Mammary epithelial cell (primary cell): ENCODE measurements at regions of chr20 and their contacts with region 1.

Region 1: DNA sequence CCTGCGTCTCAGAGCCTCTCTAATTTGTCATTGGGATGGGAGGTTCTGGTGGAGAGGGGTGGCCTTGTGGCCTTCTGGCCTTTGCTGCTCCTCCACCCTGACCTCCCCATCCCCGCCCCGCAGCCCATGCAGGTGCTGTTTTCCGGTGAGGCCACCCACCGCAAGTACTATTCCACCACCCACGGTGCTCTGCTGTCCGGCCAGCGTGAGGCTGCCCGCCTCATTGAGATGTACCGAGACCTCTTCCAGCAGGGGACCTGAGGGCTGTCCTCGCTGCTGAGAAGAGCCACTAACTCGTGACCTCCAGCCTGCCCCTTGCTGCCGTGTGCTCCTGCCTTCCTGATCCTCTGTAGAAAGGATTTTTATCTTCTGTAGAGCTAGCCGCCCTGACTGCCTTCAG is 171.8 kb upstream of the RNF24 start:
- DNase-seq: no peak
- H3K4me3 ChIP-seq: no peak overlapping the region
- H3K27ac ChIP-seq: no peak overlapping the region
- H3K4me1 ChIP-seq: peaks cover 13% of the 10 kb centered on the region
- H3K27me3 ChIP-seq: no peaks in the 10 kb centered on the region
- CTCF ChIP-seq: no peak

Region 2: GRCh38 chr20:4119854-4120209 is 67.3 kb before region 1 on chr20:
- CTCF ChIA-PET with region 1: no interaction called
- dilution Hi-C with region 1: no loop called
- in situ Hi-C with region 1: no loop called
- intact Hi-C with region 1: no loop called
- DNase-seq: no peak
- H3K4me3 ChIP-seq: no peak overlapping the region
- H3K27ac ChIP-seq: no peak overlapping the region
- H3K4me1 ChIP-seq: no peaks in the 10 kb centered on the region
- H3K27me3 ChIP-seq: no peaks in the 10 kb centered on the region
- CTCF ChIP-seq: no peak

Region 3: DNA sequence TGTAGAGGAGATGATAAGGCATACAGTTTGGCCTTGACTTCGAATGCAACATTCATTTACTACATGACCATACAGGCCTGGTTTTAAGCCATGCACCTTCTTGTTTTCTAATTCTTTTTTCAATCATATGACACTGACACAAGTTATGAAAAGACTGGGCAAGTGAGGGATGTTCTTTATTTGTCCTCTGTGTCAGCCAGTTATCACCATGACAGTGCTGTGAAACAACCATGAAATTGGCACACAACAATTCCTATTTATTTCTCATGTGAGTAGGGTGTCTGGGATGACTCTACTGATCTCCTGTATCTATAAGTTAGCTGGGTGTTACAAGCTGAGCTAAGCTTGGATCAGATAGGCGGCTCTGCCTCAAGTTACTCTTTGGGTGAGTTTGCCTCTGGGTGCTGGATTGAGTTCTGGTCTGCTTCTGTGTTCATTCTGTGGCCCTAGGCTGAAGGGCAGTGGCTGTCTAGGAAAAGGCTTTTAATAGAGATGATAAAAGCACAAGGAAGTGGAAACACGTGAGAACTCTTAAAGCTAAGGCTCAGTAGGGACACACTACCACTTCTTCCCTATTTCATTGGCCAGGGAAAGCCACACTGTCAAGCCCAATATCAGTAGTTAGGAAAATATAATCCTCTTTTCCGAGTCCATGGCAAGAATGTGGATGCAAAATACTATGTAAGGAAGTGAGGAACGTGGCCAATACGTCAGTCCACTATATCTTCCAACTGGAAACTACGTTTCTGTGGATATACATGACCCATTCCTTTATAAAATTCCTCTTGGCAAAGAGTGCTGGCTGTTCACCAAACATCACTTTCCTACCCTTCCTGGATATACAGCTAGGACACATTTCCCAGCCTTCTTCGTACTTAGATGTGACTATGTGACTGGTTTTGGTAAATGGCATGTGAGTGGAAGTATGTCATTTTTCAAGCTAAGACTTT is 45.6 kb before region 1 on chr20:
- CTCF ChIA-PET with region 1: no interaction called
- dilution Hi-C with region 1: loop called (anchors 5 kb)
- in situ Hi-C with region 1: no loop called
- intact Hi-C with region 1: no loop called
- DNase-seq: no peak
- H3K4me3 ChIP-seq: no peak overlapping the region
- H3K27ac ChIP-seq: no peak overlapping the region
- H3K4me1 ChIP-seq: peaks cover 2% of the 10 kb centered on the region
- H3K27me3 ChIP-seq: no peaks in the 10 kb centered on the region
- CTCF ChIP-seq: no peak

Region 4: GRCh38 chr20:4633780-4634179 is 446.6 kb after region 1 on chr20:
- CTCF ChIA-PET with region 1: no interaction called
- dilution Hi-C with region 1: no loop called
- in situ Hi-C with region 1: no loop called
- intact Hi-C with region 1: no loop called
- DNase-seq: peak; percentile 66
- H3K4me3 ChIP-seq: no peak overlapping the region
- H3K27ac ChIP-seq: peak overlapping the region; percentile 24
- H3K4me1 ChIP-seq: peaks cover 30% of the 10 kb centered on the region
- H3K27me3 ChIP-seq: no peaks in the 10 kb centered on the region
- CTCF ChIP-seq: no peak